CD4-positive, alpha-beta memory T cell (primary cell): ENCODE measurements at regions of chr6 and their contacts with region 1.

Region 1: GRCh38 chr6:1596088-1596852 is 13.4 kb upstream of the FOXC1 start:
- DNase-seq: peak in 4 of 5 donors; percentile 59 to 68 (median 63)
- H3K4me3 ChIP-seq: no peak overlapping the region
- H3K4me3 Mint-ChIP-seq: peak overlapping the region in 2 of 8 donors; percentile 32 to 39
- H3K27ac ChIP-seq: no peak overlapping the region
- H3K27ac Mint-ChIP-seq: peak overlapping the region in 1 of 7 donors; percentile 59
- H3K4me1 ChIP-seq: peaks cover 5% of the 10 kb centered on the region
- H3K4me1 Mint-ChIP-seq: peaks cover 0 to 4% (median 3%) of the 10 kb centered on the region in 4 donors
- H3K27me3 ChIP-seq: peaks cover 32% of the 10 kb centered on the region
- H3K27me3 Mint-ChIP-seq: peaks cover 52 to 58% of the 10 kb centered on the region in 2 donors

Region 2: DNA sequence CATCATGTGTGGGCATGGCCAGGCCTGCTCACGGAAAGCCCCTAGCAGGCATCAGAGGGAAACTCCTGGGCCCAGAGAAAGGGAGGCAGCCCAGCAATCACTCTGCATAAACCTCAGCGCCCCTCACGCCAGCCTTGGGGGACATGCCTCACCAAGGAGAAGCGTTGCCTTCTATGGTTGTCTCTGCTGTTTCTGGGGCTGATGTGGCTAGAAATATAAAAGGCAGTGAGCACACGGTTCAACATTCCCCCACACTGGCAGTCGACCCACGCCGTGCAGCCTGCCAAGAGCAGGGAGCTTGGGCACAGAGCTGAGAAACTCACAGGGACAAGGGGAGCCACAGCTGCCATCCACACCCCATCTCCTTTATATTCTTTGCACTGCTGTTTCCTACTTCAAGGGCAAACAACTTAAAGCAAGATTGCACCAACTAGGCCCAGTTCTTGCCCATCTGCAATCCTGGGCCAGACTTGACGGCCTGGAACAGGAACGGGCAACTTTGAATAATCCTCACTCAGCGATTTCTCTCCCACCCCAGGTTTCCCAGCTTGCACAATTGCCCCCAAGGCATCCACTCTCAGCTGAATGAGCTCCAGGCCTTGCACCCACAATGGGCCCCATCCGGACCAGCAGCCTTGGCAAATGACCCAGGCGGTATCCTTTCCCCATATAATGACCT is 22.0 kb before region 1 on chr6:
- CTCF ChIA-PET with region 1: interaction called, 11 read pairs
- POLR2A ChIA-PET with region 1: no interaction called
- intact Hi-C with region 1: no loop called
- DNase-seq: no peak
- H3K4me3 ChIP-seq: no peak overlapping the region
- H3K4me3 Mint-ChIP-seq: no peak overlapping the region
- H3K27ac ChIP-seq: no peak overlapping the region
- H3K27ac Mint-ChIP-seq: no peak overlapping the region
- H3K4me1 ChIP-seq: no peaks in the 10 kb centered on the region
- H3K4me1 Mint-ChIP-seq: no peaks in the 10 kb centered on the region
- H3K27me3 ChIP-seq: no peaks in the 10 kb centered on the region
- H3K27me3 Mint-ChIP-seq: peaks cover 6 to 17% of the 10 kb centered on the region in 2 donors

Region 3: GRCh38 chr6:1987640-1988039 is 391.4 kb after region 1 on chr6:
- CTCF ChIA-PET with region 1: no interaction called
- POLR2A ChIA-PET with region 1: no interaction called
- intact Hi-C with region 1: no loop called
- DNase-seq: no peak
- H3K4me3 ChIP-seq: no peak overlapping the region
- H3K4me3 Mint-ChIP-seq: no peak overlapping the region
- H3K27ac ChIP-seq: no peak overlapping the region
- H3K27ac Mint-ChIP-seq: no peak overlapping the region
- H3K4me1 ChIP-seq: no peaks in the 10 kb centered on the region
- H3K4me1 Mint-ChIP-seq: peaks cover 0 to 4% (median 0%) of the 10 kb centered on the region in 4 donors
- H3K27me3 ChIP-seq: no peaks in the 10 kb centered on the region
- H3K27me3 Mint-ChIP-seq: no peaks in the 10 kb centered on the region

Region 4: DNA sequence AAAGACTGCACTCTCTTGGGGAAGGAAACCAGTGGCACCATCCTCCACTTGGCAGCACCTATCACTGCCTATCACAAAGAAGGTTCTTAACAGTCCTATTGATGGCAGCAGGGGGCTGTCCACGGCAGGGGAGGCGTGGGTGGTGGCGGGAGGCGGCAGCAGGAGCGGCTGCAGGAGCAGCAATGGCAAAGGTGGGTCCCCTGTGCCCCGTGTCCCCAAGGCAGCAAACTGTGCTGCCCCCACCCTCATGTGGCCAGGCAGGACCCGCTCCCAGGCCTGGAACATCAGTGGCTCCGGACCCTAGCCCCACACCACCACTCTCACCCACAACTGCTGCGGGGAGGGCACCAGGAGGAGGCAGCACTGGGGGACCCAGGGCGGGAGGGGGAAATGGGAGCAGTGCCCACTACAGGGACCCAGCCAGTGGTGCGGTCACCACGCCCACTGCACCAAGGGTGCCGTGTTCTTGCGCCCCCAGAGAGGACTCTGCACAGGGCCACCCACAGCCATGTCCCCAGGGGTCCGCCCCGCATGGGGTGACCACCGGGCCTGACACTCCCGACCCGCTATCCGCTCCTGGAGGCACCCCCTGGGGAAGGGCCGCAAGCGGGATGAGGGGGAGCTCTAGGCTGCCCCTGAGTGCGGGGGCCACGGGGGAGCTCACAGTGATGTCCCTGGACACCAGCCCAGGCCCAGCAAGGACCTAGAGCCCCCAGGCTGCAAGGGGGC is 594.6 kb after region 1 on chr6:
- CTCF ChIA-PET with region 1: interaction called, 35 read pairs
- POLR2A ChIA-PET with region 1: no interaction called
- intact Hi-C with region 1: loop called (anchors 1 kb)
- DNase-seq: no peak
- H3K4me3 ChIP-seq: no peak overlapping the region
- H3K4me3 Mint-ChIP-seq: no peak overlapping the region
- H3K27ac ChIP-seq: no peak overlapping the region
- H3K27ac Mint-ChIP-seq: no peak overlapping the region
- H3K4me1 ChIP-seq: no peaks in the 10 kb centered on the region
- H3K4me1 Mint-ChIP-seq: peaks cover 0 to 8% (median under 1%) of the 10 kb centered on the region in 4 donors
- H3K27me3 ChIP-seq: no peaks in the 10 kb centered on the region
- H3K27me3 Mint-ChIP-seq: peaks cover 0 to 1% of the 10 kb centered on the region in 2 donors

Region 5: DNA sequence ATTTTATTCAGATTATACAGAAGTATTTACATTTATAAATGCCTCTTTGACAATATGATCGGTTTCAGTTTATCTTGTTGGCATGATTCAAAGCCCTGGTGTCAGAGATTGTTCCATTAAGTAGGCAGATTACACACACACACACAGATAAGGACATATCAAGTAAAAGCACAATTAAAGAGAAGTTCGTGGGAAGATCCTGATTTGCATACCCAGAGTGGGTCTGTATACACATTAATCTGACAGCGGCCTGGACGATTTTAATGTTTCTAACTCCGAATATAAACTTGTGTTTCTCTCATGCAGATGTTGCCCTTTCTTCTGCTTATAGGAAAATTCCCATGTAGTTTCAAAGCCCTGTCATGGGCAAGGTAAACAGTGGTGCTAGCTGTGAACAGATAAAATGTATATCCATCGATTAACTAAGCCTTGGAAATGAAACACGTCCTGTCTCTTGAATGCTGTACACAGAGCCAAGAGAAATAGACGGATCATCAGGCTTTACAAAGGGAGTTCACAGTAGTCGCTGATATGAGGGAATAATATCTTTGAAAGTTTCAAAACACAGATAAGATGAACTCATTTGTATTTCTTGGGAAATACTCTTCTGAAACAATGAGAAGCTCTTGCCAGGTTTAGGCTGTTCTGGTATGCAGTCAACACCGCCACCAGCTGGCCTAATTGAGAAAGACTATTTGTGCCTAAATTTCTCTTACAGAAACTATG is 757.3 kb after region 1 on chr6:
- CTCF ChIA-PET with region 1: interaction called, 17 read pairs
- POLR2A ChIA-PET with region 1: no interaction called
- intact Hi-C with region 1: loop called (anchors 1 kb)
- DNase-seq: peak; percentile 26 to 41 (median 31)
- H3K4me3 ChIP-seq: no peak overlapping the region
- H3K4me3 Mint-ChIP-seq: no peak overlapping the region
- H3K27ac ChIP-seq: no peak overlapping the region
- H3K27ac Mint-ChIP-seq: no peak overlapping the region
- H3K4me1 ChIP-seq: no peaks in the 10 kb centered on the region
- H3K4me1 Mint-ChIP-seq: no peaks in the 10 kb centered on the region
- H3K27me3 ChIP-seq: no peaks in the 10 kb centered on the region
- H3K27me3 Mint-ChIP-seq: no peaks in the 10 kb centered on the region

Region 6: GRCh38 chr6:2634139-2634964 is 1038.1 kb after region 1 on chr6:
- CTCF ChIA-PET with region 1: interaction called, 216 read pairs
- POLR2A ChIA-PET with region 1: interaction called, 3 read pairs
- intact Hi-C with region 1: loop called (anchors 1 kb)
- DNase-seq: peak; percentile 65 to 77 (median 75)
- H3K4me3 ChIP-seq: peak overlapping the region in 1 of 2 donors; percentile 49
- H3K4me3 Mint-ChIP-seq: peak overlapping the region; percentile 43 to 85 (median 67)
- H3K27ac ChIP-seq: no peak overlapping the region
- H3K27ac Mint-ChIP-seq: peak overlapping the region in 1 of 7 donors; percentile 30
- H3K4me1 ChIP-seq: no peaks in the 10 kb centered on the region
- H3K4me1 Mint-ChIP-seq: peaks cover 0 to 6% (median 4%) of the 10 kb centered on the region in 4 donors
- H3K27me3 ChIP-seq: no peaks in the 10 kb centered on the region
- H3K27me3 Mint-ChIP-seq: peaks cover 11 to 21% of the 10 kb centered on the region in 2 donors